Activated T-helper 2 cell treated with anti-CD3 and anti-CD28 coated beads, Interferon-gamma antibody, Interleukin-2, Interleukin-4, amounts not matched to agents 10 μg/mL and 5 μg/mL and 100 μg/mL, durations not matched to agents 14 hours and 24 hours and 36 hours (primary cell): ENCODE measurements at regions of chr15 and their contacts with region 1.

Region 1: DNA sequence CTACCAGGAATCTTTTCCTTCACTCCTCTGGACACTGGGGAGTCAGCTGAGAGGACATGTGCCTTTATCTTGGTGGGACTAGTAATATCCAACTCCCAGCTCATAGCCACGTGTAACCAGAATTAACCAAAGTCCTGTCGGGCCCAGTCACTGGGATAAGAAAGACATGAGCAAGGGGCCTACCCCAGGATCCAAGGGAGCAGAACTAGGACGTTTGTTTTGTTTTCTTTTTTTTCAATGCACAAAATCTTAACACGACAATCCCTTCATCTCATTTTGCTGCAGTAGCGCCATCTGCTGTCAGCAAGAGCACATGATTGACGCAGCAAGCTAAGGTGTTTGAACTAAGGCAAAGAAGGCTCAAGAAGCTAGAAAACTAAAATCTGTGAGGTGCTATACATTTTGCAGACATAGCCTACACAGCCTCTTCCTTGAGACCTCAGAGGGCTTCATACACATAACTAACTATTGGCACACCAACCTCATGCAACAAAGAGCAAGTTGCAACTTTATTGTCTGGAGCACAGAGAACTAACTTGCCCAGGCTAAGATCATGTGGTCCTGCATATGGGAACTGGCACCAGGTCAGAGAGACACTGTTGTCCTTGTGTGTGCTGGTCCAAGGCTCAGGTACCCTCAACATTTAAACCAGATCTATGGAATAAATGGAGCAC is 43.6 kb downstream of the RLBP1 start:
- DNase-seq: peak; percentile 52
- H3K4me3 Mint-ChIP-seq: no peak overlapping the region
- H3K27ac Mint-ChIP-seq: peak overlapping the region; percentile 59
- H3K4me1 Mint-ChIP-seq: peaks cover 38% of the 10 kb centered on the region
- H3K27me3 Mint-ChIP-seq: no peaks in the 10 kb centered on the region

Region 2: GRCh38 chr15:88878720-88879184 is 299.0 kb before region 1 on chr15:
- intact Hi-C with region 1: no loop called
- DNase-seq: peak; percentile 27
- H3K4me3 Mint-ChIP-seq: no peak overlapping the region
- H3K27ac Mint-ChIP-seq: no peak overlapping the region
- H3K4me1 Mint-ChIP-seq: no peaks in the 10 kb centered on the region
- H3K27me3 Mint-ChIP-seq: no peaks in the 10 kb centered on the region

Region 3: GRCh38 chr15:88904624-88905327 is 273.0 kb before region 1 on chr15:
- intact Hi-C with region 1: loop called (anchors 5 kb)
- DNase-seq: peak; percentile 90
- H3K4me3 Mint-ChIP-seq: no peak overlapping the region
- H3K27ac Mint-ChIP-seq: peak overlapping the region; percentile 51
- H3K4me1 Mint-ChIP-seq: peaks cover 16% of the 10 kb centered on the region
- H3K27me3 Mint-ChIP-seq: no peaks in the 10 kb centered on the region

Region 4: GRCh38 chr15:89129123-89129815 is 48.5 kb before region 1 on chr15:
- intact Hi-C with region 1: loop called (anchors 5 kb)
- DNase-seq: peak; percentile 26
- H3K4me3 Mint-ChIP-seq: no peak overlapping the region
- H3K27ac Mint-ChIP-seq: no peak overlapping the region
- H3K4me1 Mint-ChIP-seq: peaks cover 17% of the 10 kb centered on the region
- H3K27me3 Mint-ChIP-seq: no peaks in the 10 kb centered on the region

Region 5: DNA sequence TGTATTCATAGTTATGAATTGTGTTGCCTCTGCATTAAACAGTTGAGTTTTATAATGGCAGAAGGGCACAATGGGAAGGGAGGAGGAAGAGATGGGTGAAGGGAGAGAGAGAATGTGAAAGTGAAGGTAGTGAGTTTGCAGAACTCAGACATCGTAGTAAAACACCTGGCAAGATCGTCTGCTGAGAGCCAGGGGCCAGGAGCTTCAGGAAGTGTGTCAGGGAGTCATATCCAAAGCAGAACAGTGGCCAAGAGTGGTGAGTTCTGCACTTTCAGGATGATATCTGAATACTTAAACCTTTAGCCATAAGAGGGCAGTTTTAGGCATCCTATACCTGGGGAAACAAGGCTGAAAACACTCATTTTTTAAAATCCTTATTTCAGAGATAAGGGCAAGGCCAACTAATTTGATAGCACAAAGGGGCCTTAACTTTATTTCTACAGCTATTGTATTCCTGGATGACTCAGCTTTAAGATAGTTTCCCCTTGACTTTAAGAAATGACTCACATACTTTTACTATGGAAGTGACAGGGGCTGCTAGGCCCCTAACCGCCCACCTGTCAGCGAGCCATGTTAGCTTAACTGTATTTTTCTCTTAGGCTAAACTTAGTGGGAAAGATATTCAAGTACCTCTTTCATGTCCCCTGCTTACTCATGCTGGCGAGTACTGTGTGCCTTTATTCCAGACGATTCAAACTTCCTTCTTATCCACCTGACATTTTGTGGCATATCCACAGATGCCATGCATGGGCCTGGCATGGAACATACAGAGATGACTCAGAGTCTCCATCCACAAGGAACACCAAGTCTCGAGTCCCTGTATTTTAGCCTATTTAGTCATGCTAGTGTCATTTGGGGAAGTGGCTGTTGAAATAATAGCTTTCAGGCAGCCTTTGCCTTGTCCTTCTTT is 10.2 kb before region 1 on chr15:
- intact Hi-C with region 1: loop called (anchors 1 kb)
- DNase-seq: no peak
- H3K4me3 Mint-ChIP-seq: peak overlapping the region; percentile 44
- H3K27ac Mint-ChIP-seq: peak overlapping the region; percentile 86
- H3K4me1 Mint-ChIP-seq: peaks cover 29% of the 10 kb centered on the region
- H3K27me3 Mint-ChIP-seq: no peaks in the 10 kb centered on the region

Region 6: DNA sequence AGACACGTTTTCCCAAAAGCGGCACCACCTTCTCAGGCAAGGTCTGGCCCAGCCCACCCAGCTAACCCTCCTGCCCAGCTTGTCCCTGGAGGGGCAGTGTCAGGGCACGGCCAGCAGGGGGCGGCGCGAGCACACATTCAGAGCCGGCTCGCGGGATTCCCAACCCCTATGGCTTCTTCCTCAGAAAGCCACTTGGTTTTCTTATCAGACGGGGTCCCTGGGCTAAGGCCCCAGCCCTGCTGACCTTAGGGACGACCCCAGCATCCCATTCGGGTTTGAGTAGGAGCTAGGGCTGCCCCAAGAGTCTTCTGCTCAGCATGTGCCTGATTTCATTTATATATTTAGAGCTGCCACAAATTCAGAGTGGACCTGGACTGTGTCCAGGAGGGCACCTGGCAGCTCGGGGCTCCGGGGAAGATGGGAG is 29.1 kb after region 1 on chr15:
- intact Hi-C with region 1: loop called (anchors 2 kb)
- DNase-seq: peak; percentile 63
- H3K4me3 Mint-ChIP-seq: no peak overlapping the region
- H3K27ac Mint-ChIP-seq: peak overlapping the region; percentile 15
- H3K4me1 Mint-ChIP-seq: peaks cover 39% of the 10 kb centered on the region
- H3K27me3 Mint-ChIP-seq: peaks cover 3% of the 10 kb centered on the region